ENCODE measurements at regions of chr13 and their contacts with region 1.

Region 1: GRCh38 chr13:85140192-85140591 is 659.0 kb downstream of the SLITRK6 start:
- DNase-seq: no peak
- ATAC-seq: no peak
- H3K4me3 ChIP-seq: no peak overlapping the region
- H3K4me3 Mint-ChIP-seq: no peak overlapping the region
- H3K27ac ChIP-seq: no peak overlapping the region
- H3K27ac Mint-ChIP-seq: no peak overlapping the region
- H3K4me1 ChIP-seq: no peaks in the 10 kb centered on the region
- H3K4me1 Mint-ChIP-seq: no peaks in the 10 kb centered on the region
- H3K27me3 ChIP-seq: no peaks in the 10 kb centered on the region
- H3K27me3 Mint-ChIP-seq: no peaks in the 10 kb centered on the region
- CTCF ChIP-seq: no peak

Region 2: DNA sequence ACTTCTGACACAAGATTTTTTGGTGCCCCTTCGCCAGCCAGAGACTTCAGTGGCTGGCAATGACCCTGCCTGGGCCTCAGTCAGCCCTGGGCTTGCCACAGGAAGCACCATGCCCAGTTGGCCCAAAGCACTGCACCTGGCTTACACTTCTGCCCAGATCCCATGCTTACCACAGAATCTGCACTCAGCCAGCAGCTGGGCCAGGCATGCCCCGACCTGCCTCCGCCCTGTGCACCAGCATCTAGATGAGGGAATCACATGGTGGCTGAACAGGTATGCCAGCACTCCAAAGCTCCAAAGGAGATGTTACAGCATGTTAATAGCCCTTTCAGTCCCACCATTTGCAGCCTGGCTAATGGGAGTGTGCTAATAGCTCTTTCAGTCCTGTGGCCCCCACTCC is 31.8 kb before region 1 on chr13:
- CTCF ChIA-PET with region 1: no interaction called
- POLR2A ChIA-PET with region 1: no interaction called
- intact Hi-C with region 1: loop called in 1 of 2 experiments (anchors 1 kb)
- DNase-seq: no peak
- ATAC-seq: no peak
- H3K4me3 ChIP-seq: no peak overlapping the region
- H3K4me3 Mint-ChIP-seq: no peak overlapping the region
- H3K27ac ChIP-seq: no peak overlapping the region
- H3K27ac Mint-ChIP-seq: no peak overlapping the region
- H3K4me1 ChIP-seq: no peaks in the 10 kb centered on the region
- H3K4me1 Mint-ChIP-seq: no peaks in the 10 kb centered on the region
- H3K27me3 ChIP-seq: no peaks in the 10 kb centered on the region
- H3K27me3 Mint-ChIP-seq: no peaks in the 10 kb centered on the region
- CTCF ChIP-seq: no peak

Region 3: GRCh38 chr13:86038490-86038889 is 898.3 kb after region 1 on chr13:
- CTCF ChIA-PET with region 1: no interaction called
- POLR2A ChIA-PET with region 1: no interaction called
- intact Hi-C with region 1: no loop called
- DNase-seq: no peak
- ATAC-seq: no peak
- H3K4me3 ChIP-seq: no peak overlapping the region
- H3K4me3 Mint-ChIP-seq: no peak overlapping the region
- H3K27ac ChIP-seq: no peak overlapping the region
- H3K27ac Mint-ChIP-seq: no peak overlapping the region
- H3K4me1 ChIP-seq: no peaks in the 10 kb centered on the region
- H3K4me1 Mint-ChIP-seq: no peaks in the 10 kb centered on the region
- H3K27me3 ChIP-seq: no peaks in the 10 kb centered on the region
- H3K27me3 Mint-ChIP-seq: no peaks in the 10 kb centered on the region
- CTCF ChIP-seq: no peak